ENCODE measurements at regions of chr6 and their contacts with region 1.

Region 1: GRCh38 chr6:119110601-119111548 is 32.4 kb upstream of the FAM184A start:
- DNase-seq: no peak
- ATAC-seq: peak; percentile 85 to 90

Region 2: DNA sequence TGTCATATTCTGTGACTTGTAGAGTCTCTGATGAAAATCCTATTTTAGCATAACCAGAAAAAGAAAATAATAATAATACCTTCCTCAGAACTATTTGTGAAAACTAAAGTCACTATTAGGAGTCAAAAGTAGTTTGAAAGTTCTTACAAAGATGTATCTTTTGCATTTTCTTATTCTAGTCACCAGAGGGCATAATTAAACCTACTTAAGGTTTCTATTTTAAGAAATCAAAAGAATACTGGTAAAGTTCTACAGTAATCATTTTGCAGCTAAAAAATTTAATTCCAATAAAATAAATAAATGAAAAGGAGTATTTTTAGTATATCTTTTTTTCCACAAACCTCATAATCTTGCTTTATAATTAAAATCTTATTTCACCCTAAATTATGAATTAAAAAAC is 147.9 kb before region 1 on chr6:
- intact Hi-C with region 1: loop called (anchors 2 to 5 kb)
- DNase-seq: no peak
- ATAC-seq: no peak

Region 3: DNA sequence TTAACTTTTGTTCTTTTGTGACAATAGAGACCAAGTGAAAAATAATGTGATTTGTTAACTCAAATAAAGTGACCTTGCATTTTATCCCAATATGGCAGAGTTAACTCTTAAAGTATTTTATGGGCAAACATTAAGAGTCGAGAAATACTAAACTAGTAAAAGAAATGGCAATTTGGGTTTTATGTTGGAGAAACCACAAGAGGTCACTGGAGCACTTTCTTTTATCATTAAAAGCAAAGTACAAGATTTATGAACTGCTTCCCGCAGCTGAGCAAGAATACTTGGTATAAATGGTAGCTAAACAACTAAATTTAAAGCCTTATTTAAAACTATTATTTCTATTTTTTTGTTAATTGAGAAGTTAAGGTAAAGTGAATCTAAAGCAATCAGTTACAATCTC is 142.5 kb before region 1 on chr6:
- intact Hi-C with region 1: loop called (anchors 2 to 5 kb)
- DNase-seq: no peak
- ATAC-seq: no peak

Region 4: DNA sequence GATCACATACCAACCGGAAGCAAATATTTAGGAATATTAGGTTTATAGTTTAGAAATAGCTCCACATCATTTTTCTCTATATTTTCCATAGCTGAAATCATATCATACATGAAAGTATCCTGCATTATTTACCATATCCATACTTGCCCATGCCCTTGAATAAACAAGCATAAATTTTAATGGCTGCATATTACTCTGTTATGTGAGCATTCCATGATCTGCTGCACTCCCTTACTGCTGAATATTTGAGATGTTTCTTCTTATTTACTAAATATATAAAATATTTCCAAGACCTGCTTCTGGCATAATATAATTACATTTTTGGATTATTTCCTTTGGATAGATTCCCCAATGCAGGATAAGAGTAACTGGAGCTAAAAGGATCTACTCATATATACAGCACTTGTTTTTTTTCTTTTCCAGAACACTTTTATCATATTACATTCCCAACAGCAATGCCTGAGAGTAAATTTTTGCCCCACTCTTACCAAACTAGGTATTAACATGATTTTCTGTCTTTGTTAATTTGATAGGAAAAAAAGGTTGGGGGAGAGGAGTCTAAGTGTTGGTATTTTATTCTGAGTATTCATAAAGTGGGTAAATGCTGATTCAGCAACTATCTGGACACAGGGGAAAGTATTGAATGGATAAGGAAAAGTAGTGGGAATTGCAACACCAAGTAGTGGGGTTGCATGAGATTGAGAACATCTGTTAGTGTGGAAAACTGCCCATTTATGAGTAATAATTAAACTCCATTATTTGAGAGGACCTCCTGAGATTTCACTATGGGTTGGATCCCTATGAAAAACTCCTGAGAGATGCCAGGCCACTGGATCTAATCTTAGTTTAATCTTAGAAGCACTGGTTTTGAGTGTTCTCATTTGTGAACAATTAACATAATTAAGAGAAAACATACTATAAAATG is 162.7 kb after region 1 on chr6:
- intact Hi-C with region 1: no loop called
- DNase-seq: no peak
- ATAC-seq: peak; percentile 44 to 69